ENCODE measurements at regions of chr11 and their contacts with region 1.

Region 1: GRCh38 chr11:65418711-65419459 is 3.7 kb upstream of the NEAT1 start:
- DNase-seq: peak; percentile 75 to 86
- H3K4me3 ChIP-seq: peak overlapping the region in 2 of 4 experiments; percentile 5 to 37; a peak in 2 of 8 replicates
- H3K27ac ChIP-seq: peak overlapping the region; percentile 87
- H3K4me1 ChIP-seq: peaks cover 21 to 66% (median 46%) of the 10 kb centered on the region in 4 experiments
- H3K27me3 ChIP-seq: no peaks in the 10 kb centered on the region; a peak in 1 of 7 replicates
- CTCF ChIP-seq: no peak
- EP300 ChIP-seq: peak; percentile 13 to 75; a peak in 2 of 3 replicates
- POLR2A ChIP-seq: no peak; a peak in 2 of 3 replicates
- RAD21 ChIP-seq: no peak; a peak in 1 of 4 replicates

Region 2: DNA sequence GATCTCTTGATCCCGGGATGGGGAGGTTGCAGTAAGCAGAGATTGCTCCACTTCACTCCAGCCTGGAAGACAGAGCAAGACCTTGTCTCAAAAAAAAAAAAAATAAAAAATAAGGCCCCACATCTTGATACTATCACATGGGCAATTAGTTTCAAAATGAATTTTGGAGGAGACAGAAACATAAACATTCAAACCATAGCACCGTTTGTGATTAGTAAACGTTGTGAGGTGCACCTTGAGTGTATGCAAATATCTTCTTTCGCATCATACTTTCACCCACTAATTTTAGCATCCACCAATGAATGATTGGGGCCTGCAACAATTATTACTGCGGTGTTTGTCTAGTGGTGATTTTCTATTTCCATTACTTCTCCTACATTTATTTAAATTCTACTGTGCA is 259.9 kb before region 1 on chr11:
- CTCF ChIA-PET with region 1: no interaction called
- POLR2A ChIA-PET with region 1: no interaction called
- DNase-seq: no peak
- H3K4me3 ChIP-seq: no peak overlapping the region
- H3K27ac ChIP-seq: no peak overlapping the region
- H3K4me1 ChIP-seq: no peaks in the 10 kb centered on the region
- H3K27me3 ChIP-seq: no peaks in the 10 kb centered on the region
- CTCF ChIP-seq: no peak
- EP300 ChIP-seq: no peak
- POLR2A ChIP-seq: no peak
- RAD21 ChIP-seq: no peak

Region 3: DNA sequence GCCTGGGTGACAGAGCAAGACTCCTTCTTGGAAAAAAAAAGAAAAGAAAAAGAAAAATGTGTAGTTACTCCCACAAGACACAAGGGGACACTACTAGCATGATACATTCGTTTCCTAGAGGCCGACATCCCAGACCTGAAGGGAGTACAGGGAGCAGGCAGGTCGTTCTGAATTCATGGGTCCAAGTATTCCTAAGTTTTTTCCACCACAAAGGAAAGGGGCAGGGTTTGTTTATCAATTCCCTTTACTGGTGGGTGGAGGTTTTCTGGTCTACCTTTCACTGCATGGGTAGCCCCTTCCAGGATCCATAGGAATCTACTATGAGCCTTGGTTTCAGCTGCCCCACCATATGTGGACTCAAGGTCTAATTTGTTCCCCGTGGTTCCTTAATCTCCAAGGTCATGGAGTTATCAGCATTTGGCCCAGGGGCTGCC is 52.5 kb before region 1 on chr11:
- CTCF ChIA-PET with region 1: interaction called, 13 read pairs
- POLR2A ChIA-PET with region 1: interaction called, 5 read pairs
- DNase-seq: no peak
- H3K4me3 ChIP-seq: no peak overlapping the region
- H3K27ac ChIP-seq: no peak overlapping the region
- H3K4me1 ChIP-seq: peaks cover 0 to 4% (median 0%) of the 10 kb centered on the region in 4 experiments; a peak in 2 of 7 replicates
- H3K27me3 ChIP-seq: no peaks in the 10 kb centered on the region
- CTCF ChIP-seq: peak in 2 of 3 experiments; percentile 71 to 77; a peak in 3 of 4 replicates
- EP300 ChIP-seq: no peak
- POLR2A ChIP-seq: no peak
- RAD21 ChIP-seq: peak; percentile 87 to 92

Region 4: GRCh38 chr11:65398362-65398910 is 20.4 kb before region 1 on chr11:
- CTCF ChIA-PET with region 1: interaction called, 69 read pairs
- POLR2A ChIA-PET with region 1: interaction called, 10 read pairs
- DNase-seq: no peak
- H3K4me3 ChIP-seq: no peak overlapping the region
- H3K27ac ChIP-seq: no peak overlapping the region; the same call in 1 of the 2 replicates
- H3K4me1 ChIP-seq: no peaks in the 10 kb centered on the region; a peak in 1 of 7 replicates
- H3K27me3 ChIP-seq: no peaks in the 10 kb centered on the region
- CTCF ChIP-seq: peak in 1 of 3 experiments; percentile 10; a peak in 1 of 4 replicates
- EP300 ChIP-seq: no peak
- POLR2A ChIP-seq: no peak
- RAD21 ChIP-seq: no peak

Region 5: GRCh38 chr11:65440831-65441499 is 22.1 kb after region 1 on chr11:
- CTCF ChIA-PET with region 1: interaction called, 42 read pairs
- POLR2A ChIA-PET with region 1: interaction called, 79 read pairs
- DNase-seq: no peak
- H3K4me3 ChIP-seq: no peak overlapping the region
- H3K27ac ChIP-seq: no peak overlapping the region
- H3K4me1 ChIP-seq: no peaks in the 10 kb centered on the region; a peak in 2 of 7 replicates
- H3K27me3 ChIP-seq: no peaks in the 10 kb centered on the region
- CTCF ChIP-seq: no peak
- EP300 ChIP-seq: no peak
- POLR2A ChIP-seq: no peak
- RAD21 ChIP-seq: no peak

Region 6: DNA sequence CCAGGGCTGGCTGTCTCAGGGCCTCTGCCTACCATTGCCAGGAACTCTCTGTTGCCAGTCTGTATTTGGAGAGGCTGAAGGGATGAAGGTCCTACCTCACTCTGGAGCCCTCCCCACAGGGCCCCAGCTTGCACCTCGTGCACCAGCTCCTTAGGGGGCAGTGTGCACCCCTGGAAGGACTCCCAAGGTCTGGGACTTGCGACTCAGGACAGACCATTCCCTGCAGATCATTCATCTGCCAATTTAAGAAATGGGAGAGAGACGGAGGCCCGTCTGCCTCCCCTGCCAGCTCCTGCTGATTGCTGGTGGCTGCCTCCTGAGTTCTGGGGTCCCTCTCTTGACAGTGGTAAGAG is 52.5 kb after region 1 on chr11:
- CTCF ChIA-PET with region 1: interaction called, 430 read pairs
- POLR2A ChIA-PET with region 1: interaction called, 75 read pairs
- DNase-seq: peak in 1 of 2 experiments; percentile 66
- H3K4me3 ChIP-seq: no peak overlapping the region
- H3K27ac ChIP-seq: no peak overlapping the region
- H3K4me1 ChIP-seq: no peaks in the 10 kb centered on the region
- H3K27me3 ChIP-seq: no peaks in the 10 kb centered on the region; a peak in 1 of 7 replicates
- CTCF ChIP-seq: peak; percentile 45 to 69 (median 63); a peak in 3 of 4 replicates
- EP300 ChIP-seq: no peak
- POLR2A ChIP-seq: no peak
- RAD21 ChIP-seq: peak; percentile 63 to 70

Region 7: GRCh38 chr11:65506770-65507505 is 88.1 kb after region 1 on chr11:
- CTCF ChIA-PET with region 1: interaction called, 115 read pairs
- POLR2A ChIA-PET with region 1: interaction called, 826 read pairs
- DNase-seq: peak in 1 of 2 experiments; percentile 63
- H3K4me3 ChIP-seq: no peak overlapping the region
- H3K27ac ChIP-seq: no peak overlapping the region
- H3K4me1 ChIP-seq: peaks cover 0 to 7% (median 3%) of the 10 kb centered on the region in 4 experiments; a peak in 4 of 7 replicates
- H3K27me3 ChIP-seq: no peaks in the 10 kb centered on the region
- CTCF ChIP-seq: no peak
- EP300 ChIP-seq: no peak
- POLR2A ChIP-seq: peak; percentile 71 to 98
- RAD21 ChIP-seq: no peak

Region 8: DNA sequence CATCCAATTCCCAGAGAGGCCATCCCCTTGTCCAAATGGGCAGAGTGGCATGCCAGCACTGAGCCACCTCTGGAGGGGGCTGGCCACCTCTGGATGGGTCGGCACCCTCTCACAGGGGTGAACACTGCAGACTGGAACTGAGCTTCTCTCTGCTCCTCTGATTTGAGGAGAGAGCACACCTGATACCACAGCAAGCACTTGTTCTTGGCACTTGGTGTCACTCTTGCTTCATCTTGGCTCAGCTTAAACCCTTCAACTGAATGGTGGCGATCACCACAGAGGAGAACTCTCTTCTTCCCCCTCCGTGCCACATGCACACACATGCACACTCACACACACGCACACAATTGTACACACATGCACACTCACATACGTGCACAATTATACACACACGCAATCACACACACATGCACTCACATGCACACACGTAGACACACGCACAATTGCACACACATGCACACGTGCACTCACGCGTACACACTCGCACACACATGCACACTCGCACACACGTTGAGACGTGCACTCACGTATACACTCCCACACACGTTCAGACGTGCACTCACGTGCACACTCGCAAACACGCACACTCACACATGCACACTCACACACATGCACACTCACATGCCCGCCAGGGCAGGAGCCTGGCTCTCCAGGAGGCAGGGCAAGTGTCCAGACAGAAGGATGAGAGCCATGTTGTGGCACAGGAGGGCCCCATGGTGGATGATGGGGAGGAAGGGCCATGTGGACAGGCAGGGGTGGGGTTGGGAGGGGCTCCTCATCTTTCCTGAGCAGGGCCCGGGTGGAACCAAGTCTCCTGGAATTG is 391.4 kb after region 1 on chr11:
- CTCF ChIA-PET with region 1: no interaction called
- POLR2A ChIA-PET with region 1: no interaction called
- DNase-seq: no peak
- H3K4me3 ChIP-seq: no peak overlapping the region
- H3K27ac ChIP-seq: no peak overlapping the region
- H3K4me1 ChIP-seq: no peaks in the 10 kb centered on the region
- H3K27me3 ChIP-seq: no peaks in the 10 kb centered on the region; a peak in 2 of 7 replicates
- CTCF ChIP-seq: 0 out of 4 replicates have a peak, but pooled peaks of 1 of the 3 experiments have one; percentile 20
- EP300 ChIP-seq: no peak
- POLR2A ChIP-seq: no peak
- RAD21 ChIP-seq: peak; percentile 17 to 41; a peak in 3 of 4 replicates